ENCODE measurements at regions of chr13 and their contacts with region 1.

Region 1: GRCh38 chr13:32746474-32746873 is 160.2 kb downstream of the PDS5B start:
- DNase-seq: peak; percentile 37
- H3K4me3 ChIP-seq: no peak overlapping the region
- CTCF ChIP-seq: no peak

Region 2: DNA sequence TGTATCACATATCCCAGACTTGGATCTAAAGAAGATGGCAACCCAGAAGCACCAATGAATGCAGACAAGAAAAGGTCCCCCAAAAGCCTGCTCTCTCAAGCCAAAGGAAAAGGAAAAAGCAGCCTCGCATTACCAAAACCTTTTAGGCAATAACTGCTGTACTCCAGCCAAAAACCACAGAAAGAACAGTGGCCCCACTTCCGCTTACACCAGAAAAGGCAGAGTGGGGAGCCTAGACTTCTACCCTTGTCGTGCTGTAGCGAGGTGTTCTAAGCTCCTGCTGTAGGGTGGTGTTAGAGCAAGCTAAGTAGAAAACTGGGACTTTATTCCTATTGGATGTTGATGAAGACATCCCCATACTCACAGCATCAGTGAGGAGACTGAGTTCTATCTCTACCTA is 1251.1 kb before region 1 on chr13:
- in situ Hi-C with region 1: no loop called
- DNase-seq: no peak
- H3K4me3 ChIP-seq: no peak overlapping the region
- CTCF ChIP-seq: no peak

Region 3: DNA sequence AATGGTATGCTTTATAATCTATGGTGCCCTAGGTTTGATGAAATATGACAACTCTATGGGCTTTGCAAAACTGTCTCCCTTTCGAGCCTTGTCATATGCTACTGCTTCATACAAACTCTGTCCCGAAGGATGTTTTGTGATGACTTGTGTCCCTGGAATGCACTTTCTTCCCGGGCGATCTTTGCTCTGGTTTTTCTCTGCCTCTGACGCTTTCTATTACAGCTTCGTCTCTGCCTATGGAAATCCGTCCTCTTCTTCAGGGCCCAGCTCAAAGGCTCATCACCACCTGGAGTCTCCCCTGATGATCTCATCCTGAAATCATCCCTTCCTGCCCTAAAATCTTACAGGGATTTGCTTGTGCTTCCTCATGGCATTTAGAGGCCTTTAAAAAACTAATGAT is 78.2 kb after region 1 on chr13:
- in situ Hi-C with region 1: loop called (anchors 5 kb)
- DNase-seq: peak; percentile 62
- H3K4me3 ChIP-seq: no peak overlapping the region
- CTCF ChIP-seq: no peak

Region 4: DNA sequence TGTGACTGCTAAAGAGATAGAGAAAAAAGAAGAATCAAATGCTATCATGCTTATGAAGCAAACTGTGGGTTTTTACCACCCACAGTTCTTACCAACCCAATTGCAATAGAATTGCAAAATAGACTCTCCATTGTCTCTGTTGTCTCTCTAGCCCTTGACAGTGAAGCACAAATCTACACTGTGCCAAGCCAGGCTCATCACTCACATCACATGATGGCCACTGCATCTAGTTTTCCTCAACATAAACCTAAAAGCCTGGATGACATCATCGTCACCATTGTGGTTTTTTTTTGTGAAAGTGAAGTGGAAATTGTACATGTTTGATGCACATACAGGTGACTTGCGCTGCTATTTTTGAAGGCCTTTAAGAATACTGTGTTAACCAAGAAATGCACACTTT is 325.8 kb after region 1 on chr13:
- in situ Hi-C with region 1: no loop called
- DNase-seq: no peak
- H3K4me3 ChIP-seq: no peak overlapping the region
- CTCF ChIP-seq: no peak

Region 5: DNA sequence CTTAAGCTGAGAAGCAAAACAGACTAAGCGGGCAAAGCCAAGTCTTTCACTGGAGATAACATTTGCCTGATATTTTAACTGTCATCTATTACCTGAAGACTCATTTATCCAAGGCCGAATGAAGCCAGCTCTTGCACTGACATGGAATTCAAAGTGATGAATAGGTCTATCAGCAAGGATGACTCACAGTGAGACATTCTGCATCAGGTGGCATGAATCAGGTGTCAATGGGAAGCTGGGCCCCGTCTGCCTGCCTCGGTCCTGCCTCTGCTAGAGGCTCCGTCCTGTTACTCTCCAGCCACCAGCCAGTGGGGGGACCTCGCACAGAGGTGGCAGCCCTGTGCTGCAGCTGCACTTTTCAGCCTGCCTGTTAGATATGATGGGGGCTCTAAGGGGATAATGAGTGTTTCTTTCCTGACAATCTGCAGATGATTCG is 515.6 kb after region 1 on chr13:
- in situ Hi-C with region 1: no loop called
- DNase-seq: no peak
- H3K4me3 ChIP-seq: no peak overlapping the region
- CTCF ChIP-seq: no peak